GM10248 (cell line): ENCODE measurements at regions of chr11 and their contacts with region 1.

Region 1: GRCh38 chr11:102495161-102496042 is 35.1 kb downstream of the MMP7 start:
- DNase-seq: peak; percentile 58
- CTCF ChIP-seq: peak; percentile 68

Region 2: DNA sequence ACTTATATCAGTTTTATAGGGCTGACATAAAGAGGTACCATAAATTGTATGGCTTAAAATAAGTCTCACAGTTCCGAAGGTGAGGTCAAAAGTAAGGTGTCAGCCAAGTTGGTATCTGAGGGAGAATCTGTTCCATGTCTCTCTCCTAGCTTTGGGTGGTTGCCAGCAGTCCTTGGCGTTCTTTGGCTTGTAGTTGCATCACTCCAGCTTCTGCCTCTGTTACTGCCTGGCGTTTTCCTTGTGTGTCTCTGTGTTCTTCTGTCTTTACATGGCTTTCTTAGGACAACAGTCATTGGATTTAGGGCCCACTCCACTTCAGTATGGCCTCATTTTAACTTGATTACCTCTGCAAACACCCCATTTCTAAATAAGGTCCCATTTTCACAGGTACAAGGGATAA is 18.5 kb after region 1 on chr11:
- CTCF ChIA-PET with region 1: interaction called, 13 read pairs
- POLR2A ChIA-PET with region 1: no interaction called
- DNase-seq: no peak
- CTCF ChIP-seq: no peak

Region 3: GRCh38 chr11:102695201-102695600 is 199.8 kb after region 1 on chr11:
- CTCF ChIA-PET with region 1: no interaction called
- POLR2A ChIA-PET with region 1: no interaction called
- DNase-seq: no peak
- CTCF ChIP-seq: no peak

Region 4: DNA sequence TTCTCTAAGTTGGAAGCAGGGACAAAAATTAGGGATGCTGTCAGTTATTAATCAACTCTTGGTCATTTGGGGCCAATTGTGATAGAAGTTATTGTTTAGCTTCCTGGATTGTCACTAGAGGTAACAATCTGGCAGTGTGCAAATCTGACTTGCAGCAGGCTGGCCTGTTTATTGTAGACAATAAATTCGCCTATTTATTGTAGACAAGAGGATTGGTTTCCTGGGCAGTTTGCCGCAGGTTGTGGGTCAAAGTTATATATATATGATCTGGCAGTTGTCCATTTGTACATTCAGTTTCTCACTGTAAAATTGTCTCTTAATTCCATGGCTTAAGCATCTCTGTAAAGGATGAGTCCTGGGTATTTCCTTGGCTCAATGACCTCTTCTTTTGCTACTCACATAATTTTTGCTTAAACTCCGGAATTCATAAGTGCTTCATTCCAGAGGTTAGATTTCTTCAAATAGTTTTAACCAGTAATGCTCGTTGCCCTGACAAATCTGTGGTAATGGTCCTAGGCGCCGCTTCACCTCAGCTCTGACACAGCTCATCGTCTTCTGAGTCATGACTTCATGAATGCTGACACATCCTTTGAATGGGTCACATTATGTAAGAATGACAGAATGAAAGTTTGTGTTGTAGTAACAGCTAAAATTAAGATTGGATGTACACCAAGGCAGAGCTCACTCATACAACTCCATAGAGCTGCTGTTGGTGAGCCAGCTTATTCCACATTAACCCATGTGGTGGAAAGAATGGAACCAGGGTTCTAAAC is 355.8 kb after region 1 on chr11:
- CTCF ChIA-PET with region 1: no interaction called
- POLR2A ChIA-PET with region 1: no interaction called
- DNase-seq: no peak
- CTCF ChIP-seq: no peak

Region 5: DNA sequence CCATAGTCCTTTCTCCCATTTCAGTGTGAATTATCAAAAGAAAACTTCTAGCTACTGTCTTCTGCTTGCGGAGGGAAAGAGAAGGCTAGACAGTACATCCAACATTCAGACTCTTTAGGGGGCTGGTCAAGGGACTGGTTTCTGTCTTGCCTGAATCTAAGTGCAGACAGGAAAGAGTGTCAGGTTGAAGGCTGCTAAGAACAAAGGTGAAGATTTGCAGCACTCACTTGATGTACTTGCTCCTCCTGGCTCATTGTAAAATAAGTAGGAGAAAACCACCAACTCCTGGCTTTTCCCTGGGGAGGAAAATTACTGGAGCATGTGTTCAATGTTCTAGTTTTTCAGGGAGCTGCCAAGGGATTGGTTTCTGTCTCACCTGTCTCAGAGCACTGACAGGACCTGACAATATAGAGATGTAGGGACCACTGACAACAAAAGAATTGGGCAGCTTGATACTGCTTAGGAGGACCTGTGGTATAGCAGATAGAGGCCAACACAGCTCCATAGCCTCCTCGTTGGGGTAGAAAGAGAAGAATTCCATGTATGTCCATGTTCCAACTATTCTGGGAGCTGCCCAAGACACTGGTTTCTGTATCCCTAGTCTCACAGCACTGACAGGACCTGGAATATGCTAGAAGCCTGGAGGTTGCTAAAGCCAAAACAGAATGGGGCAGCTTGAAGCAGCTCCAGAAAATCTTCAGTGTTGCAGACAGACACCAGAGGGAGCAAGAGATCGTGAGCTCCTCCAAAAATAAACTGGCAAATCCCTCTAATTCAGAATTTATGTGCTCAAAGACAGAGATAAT is 419.0 kb after region 1 on chr11:
- CTCF ChIA-PET with region 1: no interaction called
- POLR2A ChIA-PET with region 1: no interaction called
- DNase-seq: no peak
- CTCF ChIP-seq: peak; percentile 52